ENCODE measurements at regions of chr7 and their contacts with region 1.

Region 1: DNA sequence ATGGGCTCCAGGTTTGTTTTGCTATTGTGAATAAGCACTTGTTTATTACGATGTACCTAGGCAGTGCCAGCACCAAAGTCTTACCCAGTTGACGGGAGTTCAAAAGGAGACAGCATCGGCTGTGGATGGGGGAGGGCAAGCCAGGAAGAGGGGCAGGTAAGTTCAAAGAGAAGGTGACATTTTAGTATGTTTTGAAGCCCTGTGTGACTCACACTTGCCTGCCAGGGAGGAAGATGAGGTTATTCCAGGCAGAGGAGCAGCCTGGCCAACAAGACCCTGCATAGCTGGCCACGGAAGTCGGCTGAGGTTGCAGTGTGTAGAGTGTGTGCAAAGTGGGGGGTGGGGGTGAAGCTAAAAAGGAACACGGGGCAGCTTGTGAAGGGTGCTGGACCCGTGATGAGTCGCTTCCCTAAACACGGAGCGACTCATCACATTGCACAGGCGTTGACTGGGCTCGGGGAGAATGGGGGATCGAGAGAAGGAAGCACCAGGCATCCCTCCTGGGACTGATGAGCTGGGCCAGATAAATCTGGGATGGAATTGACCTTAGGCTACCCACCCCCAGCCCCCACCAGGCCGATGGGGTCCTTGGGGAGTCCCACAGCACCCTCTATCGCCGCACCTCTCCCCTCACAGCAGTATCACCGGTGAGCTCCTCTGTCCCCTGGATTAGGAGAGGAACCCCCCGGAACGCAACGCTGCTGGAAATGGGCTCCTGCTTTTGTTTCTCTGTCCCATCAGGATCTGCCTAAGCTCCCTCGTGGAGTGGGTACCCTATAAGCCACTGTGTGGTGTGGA is 97.9 kb upstream of the IKZF1 start:
- DNase-seq: no peak
- ATAC-seq: no peak
- H3K4me3 ChIP-seq: no peak overlapping the region
- H3K4me3 Mint-ChIP-seq: no peak overlapping the region
- H3K27ac ChIP-seq: no peak overlapping the region
- H3K27ac Mint-ChIP-seq: no peak overlapping the region
- H3K4me1 ChIP-seq: peaks cover 8 to 14% of the 10 kb centered on the region in 2 donors
- H3K4me1 Mint-ChIP-seq: peaks cover 45% of the 10 kb centered on the region
- H3K27me3 ChIP-seq: no peaks in the 10 kb centered on the region
- H3K27me3 Mint-ChIP-seq: no peaks in the 10 kb centered on the region
- CTCF ChIP-seq: no peak

Region 2: GRCh38 chr7:50037086-50037485 is 169.6 kb before region 1 on chr7:
- CTCF ChIA-PET with region 1: no interaction called
- POLR2A ChIA-PET with region 1: no interaction called
- intact Hi-C with region 1: no loop called
- DNase-seq: no peak
- ATAC-seq: no peak
- H3K4me3 ChIP-seq: no peak overlapping the region
- H3K4me3 Mint-ChIP-seq: no peak overlapping the region
- H3K27ac ChIP-seq: no peak overlapping the region
- H3K27ac Mint-ChIP-seq: no peak overlapping the region
- H3K4me1 ChIP-seq: no peaks in the 10 kb centered on the region
- H3K4me1 Mint-ChIP-seq: no peaks in the 10 kb centered on the region
- H3K27me3 ChIP-seq: peaks cover 0 to 17% (median 7%) of the 10 kb centered on the region in 4 experiments
- H3K27me3 Mint-ChIP-seq: peaks cover 30% of the 10 kb centered on the region
- CTCF ChIP-seq: no peak

Region 3: GRCh38 chr7:50112250-50112975 is 94.2 kb before region 1 on chr7:
- CTCF ChIA-PET with region 1: no interaction called
- POLR2A ChIA-PET with region 1: no interaction called
- intact Hi-C with region 1: no loop called
- DNase-seq: no peak
- ATAC-seq: no peak
- H3K4me3 ChIP-seq: no peak overlapping the region
- H3K4me3 Mint-ChIP-seq: no peak overlapping the region
- H3K27ac ChIP-seq: no peak overlapping the region
- H3K27ac Mint-ChIP-seq: no peak overlapping the region
- H3K4me1 ChIP-seq: no peaks in the 10 kb centered on the region
- H3K4me1 Mint-ChIP-seq: no peaks in the 10 kb centered on the region
- H3K27me3 ChIP-seq: no peaks in the 10 kb centered on the region
- H3K27me3 Mint-ChIP-seq: peaks cover 7% of the 10 kb centered on the region
- CTCF ChIP-seq: no peak

Region 4: DNA sequence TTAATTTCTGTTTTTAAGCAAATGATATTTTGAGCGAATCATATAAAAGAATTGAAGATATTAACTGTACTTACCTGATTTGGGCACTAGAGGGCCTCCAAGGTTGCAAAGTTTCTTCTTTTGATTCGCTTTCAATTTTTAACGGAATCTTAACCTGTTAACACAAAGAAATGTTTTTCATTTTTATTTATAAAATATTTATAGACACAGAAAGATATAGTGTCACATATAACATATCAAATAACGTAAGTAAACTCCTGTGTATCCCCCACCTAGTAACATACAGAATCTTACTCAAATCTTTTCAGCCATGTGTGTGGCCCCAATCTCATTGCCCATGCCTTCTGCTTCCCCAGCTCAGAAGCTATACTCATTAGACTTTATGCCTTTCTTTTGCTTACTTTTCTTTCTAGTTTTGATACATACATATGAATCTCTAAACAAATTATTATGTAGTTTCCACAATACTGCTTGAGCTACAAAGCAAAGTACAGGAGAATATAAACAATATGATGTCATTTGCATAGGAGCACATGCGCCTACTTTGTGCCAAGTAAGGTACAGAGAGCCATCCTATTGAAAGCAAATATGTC is 64.1 kb before region 1 on chr7:
- CTCF ChIA-PET with region 1: interaction called, 33 read pairs
- POLR2A ChIA-PET with region 1: no interaction called
- intact Hi-C with region 1: loop called (anchors 1 kb)
- DNase-seq: peak; percentile 71
- ATAC-seq: peak; percentile 71
- H3K4me3 ChIP-seq: peak overlapping the region in 4 of 5 experiments; percentile 8 to 33 (median 30)
- H3K4me3 Mint-ChIP-seq: peak overlapping the region; percentile 80
- H3K27ac ChIP-seq: peak overlapping the region in 1 of 2 donors; percentile 62
- H3K27ac Mint-ChIP-seq: peak overlapping the region; percentile 62
- H3K4me1 ChIP-seq: peaks cover 42 to 50% of the 10 kb centered on the region in 2 donors
- H3K4me1 Mint-ChIP-seq: peaks cover 49% of the 10 kb centered on the region
- H3K27me3 ChIP-seq: no peaks in the 10 kb centered on the region
- H3K27me3 Mint-ChIP-seq: no peaks in the 10 kb centered on the region
- CTCF ChIP-seq: peak; percentile 94

Region 5: DNA sequence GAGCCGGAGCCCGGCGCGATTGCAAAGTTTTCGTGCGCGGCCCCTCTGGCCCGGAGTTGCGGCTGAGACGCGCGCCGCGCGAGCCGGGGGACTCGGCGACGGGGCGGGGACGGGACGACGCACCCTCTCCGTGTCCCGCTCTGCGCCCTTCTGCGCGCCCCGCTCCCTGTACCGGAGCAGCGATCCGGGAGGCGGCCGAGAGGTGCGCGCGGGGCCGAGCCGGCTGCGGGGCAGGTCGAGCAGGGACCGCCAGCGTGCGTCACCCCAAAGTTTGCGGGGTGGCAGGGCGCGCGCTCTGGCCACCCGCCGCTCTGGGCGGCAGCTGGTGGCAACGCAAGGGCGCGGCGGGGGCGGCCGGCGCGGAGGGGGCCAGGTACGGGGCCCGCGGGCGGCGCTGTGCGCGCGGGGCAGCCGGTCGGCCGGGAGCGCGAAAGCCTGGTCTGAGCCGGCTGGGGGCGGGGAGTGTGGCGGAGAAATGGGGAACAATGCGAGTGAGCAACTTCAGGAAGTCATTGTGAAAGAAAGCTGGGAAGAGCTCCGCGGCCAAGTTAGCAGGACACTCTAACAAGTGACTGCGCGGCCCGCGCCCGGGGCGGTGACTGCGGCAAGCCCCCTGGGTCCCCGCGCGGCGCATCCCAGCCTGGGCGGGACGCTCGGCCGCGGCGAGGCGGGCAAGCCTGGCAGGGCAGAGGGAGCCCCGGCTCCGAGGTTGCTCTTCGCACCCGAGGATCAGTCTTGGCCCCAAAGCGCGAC is 97.7 kb after region 1 on chr7 and contains the start of gene IKZF1:
- CTCF ChIA-PET with region 1: interaction called, 55 read pairs
- POLR2A ChIA-PET with region 1: interaction called, 11 read pairs
- intact Hi-C with region 1: loop called (anchors 2 kb)
- DNase-seq: peak; percentile 89
- ATAC-seq: peak; percentile 50
- H3K4me3 ChIP-seq: peak within 1 kb of the TSS; percentile 74 to 99 (median 87)
- H3K4me3 Mint-ChIP-seq: peak within 1 kb of the TSS; percentile 91
- H3K27ac ChIP-seq: peak within 1 kb of the TSS; percentile 71 to 83
- H3K27ac Mint-ChIP-seq: peak within 1 kb of the TSS; percentile 94
- H3K4me1 ChIP-seq: peaks cover 18 to 32% of the 10 kb centered on the region in 2 donors
- H3K4me1 Mint-ChIP-seq: peaks cover 36% of the 10 kb centered on the region
- H3K27me3 ChIP-seq: no peaks in the 10 kb centered on the region
- H3K27me3 Mint-ChIP-seq: no peaks in the 10 kb centered on the region
- CTCF ChIP-seq: peak; percentile 11
- total RNA-seq, gene IKZF1: 254 and 261 TPM in 2 replicates

Region 6: GRCh38 chr7:50379082-50379481 is 172.4 kb after region 1 on chr7:
- CTCF ChIA-PET with region 1: interaction called, 241 read pairs
- POLR2A ChIA-PET with region 1: no interaction called
- intact Hi-C with region 1: no loop called
- DNase-seq: no peak
- ATAC-seq: no peak
- H3K4me3 ChIP-seq: no peak overlapping the region
- H3K4me3 Mint-ChIP-seq: no peak overlapping the region
- H3K27ac ChIP-seq: peak overlapping the region in 1 of 2 donors; percentile 73
- H3K27ac Mint-ChIP-seq: peak overlapping the region; percentile 79
- H3K4me1 ChIP-seq: peaks cover 43 to 46% of the 10 kb centered on the region in 2 donors
- H3K4me1 Mint-ChIP-seq: peaks cover 76% of the 10 kb centered on the region
- H3K27me3 ChIP-seq: no peaks in the 10 kb centered on the region
- H3K27me3 Mint-ChIP-seq: no peaks in the 10 kb centered on the region
- CTCF ChIP-seq: no peak

Region 7: GRCh38 chr7:50426280-50427045 is 219.8 kb after region 1 on chr7:
- CTCF ChIA-PET with region 1: interaction called, 211 read pairs
- POLR2A ChIA-PET with region 1: no interaction called
- intact Hi-C with region 1: no loop called
- DNase-seq: no peak
- ATAC-seq: no peak
- H3K4me3 ChIP-seq: no peak overlapping the region
- H3K4me3 Mint-ChIP-seq: no peak overlapping the region
- H3K27ac ChIP-seq: no peak overlapping the region
- H3K27ac Mint-ChIP-seq: no peak overlapping the region
- H3K4me1 ChIP-seq: peaks cover 0 to 4% of the 10 kb centered on the region in 2 donors
- H3K4me1 Mint-ChIP-seq: peaks cover 8% of the 10 kb centered on the region
- H3K27me3 ChIP-seq: no peaks in the 10 kb centered on the region
- H3K27me3 Mint-ChIP-seq: no peaks in the 10 kb centered on the region
- CTCF ChIP-seq: no peak

Region 8: GRCh38 chr7:50679218-50680007 is 472.8 kb after region 1 on chr7:
- CTCF ChIA-PET with region 1: interaction called, 7 read pairs
- POLR2A ChIA-PET with region 1: no interaction called
- intact Hi-C with region 1: loop called (anchors 1 kb)
- DNase-seq: peak; percentile 66
- ATAC-seq: no peak
- H3K4me3 ChIP-seq: no peak overlapping the region
- H3K4me3 Mint-ChIP-seq: no peak overlapping the region
- H3K27ac ChIP-seq: no peak overlapping the region
- H3K27ac Mint-ChIP-seq: no peak overlapping the region
- H3K4me1 ChIP-seq: peaks cover 8 to 10% of the 10 kb centered on the region in 2 donors
- H3K4me1 Mint-ChIP-seq: peaks cover 5% of the 10 kb centered on the region
- H3K27me3 ChIP-seq: no peaks in the 10 kb centered on the region
- H3K27me3 Mint-ChIP-seq: peaks cover 22% of the 10 kb centered on the region
- CTCF ChIP-seq: peak; percentile 73

Region 9: GRCh38 chr7:51067757-51068156 is 861.1 kb after region 1 on chr7:
- CTCF ChIA-PET with region 1: no interaction called
- POLR2A ChIA-PET with region 1: no interaction called
- intact Hi-C with region 1: no loop called
- DNase-seq: peak; percentile 45
- ATAC-seq: no peak
- H3K4me3 ChIP-seq: no peak overlapping the region
- H3K4me3 Mint-ChIP-seq: no peak overlapping the region
- H3K27ac ChIP-seq: no peak overlapping the region
- H3K27ac Mint-ChIP-seq: no peak overlapping the region
- H3K4me1 ChIP-seq: no peaks in the 10 kb centered on the region
- H3K4me1 Mint-ChIP-seq: no peaks in the 10 kb centered on the region
- H3K27me3 ChIP-seq: no peaks in the 10 kb centered on the region
- H3K27me3 Mint-ChIP-seq: no peaks in the 10 kb centered on the region
- CTCF ChIP-seq: peak; percentile 57